HepG2 (cell line): ENCODE measurements at regions of chr2 and their contacts with region 1.

Region 1: GRCh38 chr2:64018923-64019718 is at the start of gene VPS54:
- DNase-seq: no peak
- ATAC-seq: peak; percentile 86
- H3K4me3 ChIP-seq: peak within 1 kb of the TSS; percentile 87 to 99 (median 87)
- H3K27ac ChIP-seq: peak within 1 kb of the TSS; percentile 97
- H3K4me1 ChIP-seq: peaks cover 78% of the 10 kb centered on the region
- H3K27me3 ChIP-seq: no peaks in the 10 kb centered on the region; a peak in 1 of 5 replicates
- CTCF ChIP-seq: no peak
- EP300 ChIP-seq: 0 out of 4 replicates have a peak, but pooled peaks of 1 of the 2 experiments have one; percentile 6
- POLR2A ChIP-seq: peak; percentile 89 to 90
- RAD21 ChIP-seq: peak; percentile 57
- total RNA-seq, gene VPS54: 64.7 and 75.4 TPM in 2 replicates

Region 2: DNA sequence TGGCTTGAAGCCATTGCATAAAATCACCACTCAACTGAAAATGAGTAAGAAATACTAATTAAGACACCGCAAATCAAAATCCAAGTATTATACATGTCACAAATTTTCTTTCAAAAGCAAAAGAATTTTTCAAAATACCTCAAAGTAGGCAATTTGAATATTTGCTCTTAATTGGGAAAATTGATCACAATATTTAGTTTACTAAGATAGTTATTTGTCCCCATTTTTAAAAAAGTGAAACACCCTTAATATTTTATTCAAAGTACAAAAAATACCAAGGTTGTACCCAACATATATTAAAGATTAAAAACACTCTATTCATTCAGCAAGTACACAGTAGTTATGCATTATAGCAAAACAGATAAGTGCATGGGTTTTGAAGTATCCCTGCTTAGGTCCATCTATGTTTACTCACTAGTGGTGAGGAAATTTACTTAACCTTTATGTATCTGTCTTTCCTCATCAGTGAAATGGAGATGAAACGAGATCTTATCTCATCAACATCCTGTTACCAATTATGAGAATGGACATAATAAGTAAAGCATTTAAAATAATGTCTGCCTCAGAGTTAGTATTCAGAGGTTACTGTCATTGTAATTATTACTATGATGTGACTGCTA is 35.0 kb before region 1 on chr2:
- CTCF ChIA-PET with region 1: no interaction called
- POLR2A ChIA-PET with region 1: interaction called, 11 read pairs
- in situ Hi-C with region 1: no loop called
- intact Hi-C with region 1: loop called (anchors 2 kb)
- DNase-seq: peak; percentile 98
- ATAC-seq: peak; percentile 79
- H3K4me3 ChIP-seq: peak overlapping the region in 2 of 3 experiments; percentile 1 to 27; a peak in 1 of 6 replicates
- H3K27ac ChIP-seq: peak overlapping the region; percentile 81
- H3K4me1 ChIP-seq: peaks cover 90% of the 10 kb centered on the region
- H3K27me3 ChIP-seq: no peaks in the 10 kb centered on the region
- CTCF ChIP-seq: no peak
- EP300 ChIP-seq: peak; percentile 80 to 100; a peak in 3 of 4 replicates
- POLR2A ChIP-seq: no peak
- RAD21 ChIP-seq: no peak

Region 3: DNA sequence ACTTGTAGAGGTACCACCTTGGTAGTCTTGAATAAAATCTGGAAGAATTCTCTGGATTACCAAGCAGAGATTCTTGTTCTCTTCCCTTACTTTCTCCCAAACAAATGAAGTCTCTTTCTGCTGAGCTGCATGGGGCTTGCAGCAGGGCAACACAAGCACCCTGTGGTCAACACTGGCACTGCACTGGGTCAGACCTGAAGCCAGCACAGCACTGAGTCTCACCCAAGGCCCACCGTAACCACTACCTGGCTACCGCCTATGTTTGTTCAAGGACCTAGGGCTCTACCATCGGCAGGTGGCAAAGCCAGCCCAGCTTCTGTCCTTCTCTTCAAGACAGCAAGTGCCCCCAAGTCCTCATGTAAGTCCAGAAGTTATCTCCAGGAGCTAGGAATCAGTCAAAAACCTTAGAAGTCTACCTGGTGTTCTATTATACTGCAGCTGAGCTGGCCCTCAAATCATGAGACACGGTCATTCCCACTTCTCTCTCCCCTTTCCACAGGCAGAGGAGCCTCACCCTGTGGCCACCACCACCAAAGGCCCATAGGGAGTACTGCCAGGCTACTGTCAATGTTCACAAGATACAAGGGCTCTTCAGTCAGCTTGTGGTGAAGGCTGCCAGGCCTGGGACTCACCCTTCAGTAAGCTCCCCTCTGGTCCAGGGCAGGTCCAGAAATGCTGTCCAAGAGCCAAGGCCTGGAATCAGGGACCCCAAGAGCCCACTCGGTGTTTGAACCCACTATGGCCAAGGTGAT is 18.3 kb before region 1 on chr2:
- CTCF ChIA-PET with region 1: no interaction called
- POLR2A ChIA-PET with region 1: interaction called, 13 read pairs
- in situ Hi-C with region 1: no loop called
- intact Hi-C with region 1: no loop called
- DNase-seq: no peak
- ATAC-seq: peak; percentile 99
- H3K4me3 ChIP-seq: no peak overlapping the region
- H3K27ac ChIP-seq: peak overlapping the region; percentile 40
- H3K4me1 ChIP-seq: peaks cover 61% of the 10 kb centered on the region
- H3K27me3 ChIP-seq: no peaks in the 10 kb centered on the region
- CTCF ChIP-seq: peak; percentile 56
- EP300 ChIP-seq: no peak
- POLR2A ChIP-seq: no peak
- RAD21 ChIP-seq: peak; percentile 73

Region 4: DNA sequence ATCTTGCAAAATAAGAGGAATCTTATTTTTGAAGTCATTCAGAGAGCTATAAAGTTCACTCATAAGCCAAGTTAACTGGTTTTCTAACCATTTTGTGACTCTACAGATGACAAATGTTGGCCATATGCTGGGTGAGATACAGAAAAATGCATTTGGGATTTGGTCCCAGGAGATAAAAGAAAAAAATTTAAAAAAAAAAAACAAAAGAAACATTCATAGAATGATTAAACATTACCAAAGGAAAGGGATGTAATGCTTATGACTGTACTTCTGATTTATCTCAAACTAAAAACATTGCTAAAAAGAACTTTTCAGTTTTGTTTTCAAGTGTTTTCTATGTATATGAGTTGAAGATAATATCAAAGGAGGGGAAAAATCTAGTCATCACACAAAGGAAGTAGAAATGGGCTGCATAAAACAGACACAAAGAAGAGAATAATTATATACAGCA is 82.0 kb after region 1 on chr2:
- CTCF ChIA-PET with region 1: no interaction called
- POLR2A ChIA-PET with region 1: interaction called, 7 read pairs
- in situ Hi-C with region 1: no loop called
- intact Hi-C with region 1: loop called (anchors 2 kb)
- DNase-seq: no peak
- ATAC-seq: no peak
- H3K4me3 ChIP-seq: no peak overlapping the region
- H3K27ac ChIP-seq: no peak overlapping the region
- H3K4me1 ChIP-seq: peaks cover 13% of the 10 kb centered on the region
- H3K27me3 ChIP-seq: no peaks in the 10 kb centered on the region
- CTCF ChIP-seq: no peak
- EP300 ChIP-seq: no peak
- POLR2A ChIP-seq: no peak
- RAD21 ChIP-seq: no peak

Region 5: DNA sequence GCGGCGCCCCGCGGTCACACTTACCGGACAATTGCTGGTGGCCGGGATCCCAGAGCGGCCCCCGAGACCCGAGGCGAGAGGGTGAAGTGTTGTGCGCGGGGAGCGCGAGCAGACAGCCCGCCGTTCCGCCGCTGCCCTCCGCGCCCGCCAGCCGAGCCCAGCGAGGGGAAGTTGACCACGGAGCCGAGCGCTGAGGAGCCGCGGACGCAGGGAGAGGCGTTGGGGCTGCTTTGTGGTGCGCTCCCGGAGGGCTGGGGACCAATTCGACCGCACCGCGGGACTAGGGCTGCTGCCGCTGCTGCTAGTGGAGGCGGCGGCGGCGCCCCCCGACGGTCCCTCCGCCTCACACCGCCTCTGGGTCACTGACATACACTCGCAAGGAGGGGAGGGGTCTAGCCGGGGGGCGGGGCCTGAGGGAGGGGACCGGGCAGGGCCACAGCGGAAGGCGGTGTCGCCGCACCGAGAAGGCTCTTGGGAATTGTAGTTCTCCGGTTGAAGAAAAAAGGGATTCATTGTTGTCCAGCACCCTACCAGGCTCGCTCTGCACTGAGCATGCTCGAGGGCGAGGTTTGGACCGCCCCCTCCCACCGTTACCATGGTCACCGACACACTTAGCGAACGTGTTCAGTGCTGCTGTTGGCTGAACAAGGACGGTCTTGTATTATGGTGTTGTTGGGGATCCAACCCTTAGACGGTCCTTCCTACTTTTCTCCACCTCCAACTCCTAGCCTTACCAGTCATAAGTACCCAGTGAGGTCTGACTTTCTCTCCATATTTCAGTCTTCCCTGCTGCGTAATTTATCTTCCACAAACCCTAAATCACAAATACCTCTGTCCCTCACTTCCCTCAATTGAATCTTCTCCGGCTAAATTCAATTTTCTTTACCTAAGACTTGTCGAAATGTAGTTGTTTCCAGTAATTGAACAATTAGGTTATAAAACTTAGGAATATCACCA is 125.2 kb after region 1 on chr2 and contains the start of gene PELI1:
- CTCF ChIA-PET with region 1: no interaction called
- POLR2A ChIA-PET with region 1: no interaction called
- in situ Hi-C with region 1: no loop called
- intact Hi-C with region 1: loop called (anchors 5 kb)
- DNase-seq: peak; percentile 100
- ATAC-seq: peak; percentile 93
- H3K4me3 ChIP-seq: peak within 1 kb of the TSS; percentile 90 to 100 (median 95)
- H3K27ac ChIP-seq: peak within 1 kb of the TSS; percentile 88
- H3K4me1 ChIP-seq: peaks cover 44% of the 10 kb centered on the region
- H3K27me3 ChIP-seq: no peaks in the 10 kb centered on the region; a peak in 1 of 5 replicates
- CTCF ChIP-seq: peak; percentile 85
- EP300 ChIP-seq: 0 out of 4 replicates have a peak, but pooled peaks of 1 of the 2 experiments have one; percentile 22
- POLR2A ChIP-seq: peak; percentile 96 to 98
- RAD21 ChIP-seq: peak; percentile 83
- total RNA-seq, gene PELI1: 12.5 and 14.9 TPM in 2 replicates